ENCODE measurements at regions of chr1 and their contacts with region 1.

Region 1: DNA sequence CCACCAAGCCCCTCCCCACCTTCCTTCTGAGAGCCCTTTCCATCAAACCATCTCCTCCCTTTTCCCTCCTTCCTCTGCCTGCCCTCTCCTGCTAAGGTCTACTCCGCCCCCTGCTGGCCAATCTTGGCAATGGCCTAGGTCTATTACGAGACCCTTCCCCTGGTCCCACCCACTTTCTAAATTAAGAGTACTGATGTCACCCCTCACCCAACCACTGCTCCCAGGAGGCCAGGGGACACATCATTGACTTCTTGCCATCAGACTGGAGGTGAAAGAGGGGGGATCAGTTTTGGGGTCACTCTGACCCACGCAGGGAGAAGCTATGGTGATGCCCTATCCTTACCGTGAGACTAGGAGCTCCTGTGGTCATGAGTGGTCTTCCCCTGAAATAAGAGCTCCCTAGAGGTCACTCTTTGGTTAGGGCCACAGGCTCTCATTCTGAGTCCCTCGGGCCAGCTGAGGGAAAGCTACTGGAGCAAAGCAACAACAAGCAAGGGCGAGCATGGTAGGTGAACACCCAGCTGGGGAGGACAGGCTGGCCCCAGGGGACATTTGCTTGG is 34.6 kb upstream of the S100A7 start:
- DNase-seq: no peak
- H3K4me3 ChIP-seq: no peak overlapping the region
- H3K27ac ChIP-seq: no peak overlapping the region
- H3K4me1 ChIP-seq: peaks cover 11 to 21% (median 20%) of the 10 kb centered on the region in 4 donors
- H3K27me3 ChIP-seq: no peaks in the 10 kb centered on the region
- CTCF ChIP-seq: peak; percentile 85 to 96 (median 92)
- EP300 ChIP-seq: no peak
- POLR2A ChIP-seq: no peak

Region 2: DNA sequence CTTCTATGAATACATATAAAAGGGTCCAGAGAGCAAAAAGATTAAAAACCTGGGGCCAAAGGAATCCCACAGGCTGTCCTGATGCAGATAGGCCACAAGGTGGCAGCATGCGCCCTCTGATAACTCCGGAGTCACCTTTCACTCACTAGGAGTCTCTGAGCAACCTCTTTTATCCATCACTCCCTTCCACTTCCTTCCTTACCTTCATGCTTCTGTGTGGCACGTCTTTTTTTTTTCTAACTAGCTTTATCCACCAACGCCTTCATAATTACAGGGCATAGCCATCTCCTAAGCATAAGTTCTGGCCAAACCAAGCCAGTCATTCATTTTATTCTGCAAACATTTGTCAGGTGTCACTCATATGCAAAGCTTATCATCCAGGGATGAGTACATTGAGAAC is 142.5 kb before region 1 on chr1:
- intact Hi-C with region 1: loop called (anchors 2 kb)
- DNase-seq: peak; percentile 91
- H3K4me3 ChIP-seq: no peak overlapping the region
- H3K27ac ChIP-seq: no peak overlapping the region
- H3K4me1 ChIP-seq: no peaks in the 10 kb centered on the region
- H3K27me3 ChIP-seq: peaks cover 0 to 57% (median 4%) of the 10 kb centered on the region in 4 donors
- CTCF ChIP-seq: peak; percentile 85 to 90 (median 89)
- EP300 ChIP-seq: no peak
- POLR2A ChIP-seq: no peak

Region 3: GRCh38 chr1:153465811-153466636 is 29.0 kb before region 1 on chr1:
- intact Hi-C with region 1: loop called (anchors 1 kb)
- DNase-seq: no peak
- H3K4me3 ChIP-seq: no peak overlapping the region
- H3K27ac ChIP-seq: no peak overlapping the region
- H3K4me1 ChIP-seq: peaks cover 4 to 17% (median 12%) of the 10 kb centered on the region in 4 donors
- H3K27me3 ChIP-seq: peaks cover 0 to 11% (median 0%) of the 10 kb centered on the region in 4 donors
- CTCF ChIP-seq: peak; percentile 77 to 83 (median 78)
- EP300 ChIP-seq: no peak
- POLR2A ChIP-seq: no peak

Measured in esophagus muscularis mucosa (tissue), 4 donors.